ENCODE measurements at regions of chr1 and their contacts with region 1.

Region 1: GRCh38 chr1:193514397-193514796 is 328.0 kb upstream of the B3GALT2 start:
- DNase-seq: no peak
- ATAC-seq: no peak
- H3K4me3 ChIP-seq: no peak overlapping the region
- H3K4me3 Mint-ChIP-seq: no peak overlapping the region
- H3K27ac ChIP-seq: no peak overlapping the region
- H3K27ac Mint-ChIP-seq: no peak overlapping the region
- H3K4me1 ChIP-seq: no peaks in the 10 kb centered on the region
- H3K4me1 Mint-ChIP-seq: peaks cover 0 to 3% (median 0%) of the 10 kb centered on the region in 7 donors
- H3K27me3 ChIP-seq: no peaks in the 10 kb centered on the region
- H3K27me3 Mint-ChIP-seq: no peaks in the 10 kb centered on the region

Region 2: DNA sequence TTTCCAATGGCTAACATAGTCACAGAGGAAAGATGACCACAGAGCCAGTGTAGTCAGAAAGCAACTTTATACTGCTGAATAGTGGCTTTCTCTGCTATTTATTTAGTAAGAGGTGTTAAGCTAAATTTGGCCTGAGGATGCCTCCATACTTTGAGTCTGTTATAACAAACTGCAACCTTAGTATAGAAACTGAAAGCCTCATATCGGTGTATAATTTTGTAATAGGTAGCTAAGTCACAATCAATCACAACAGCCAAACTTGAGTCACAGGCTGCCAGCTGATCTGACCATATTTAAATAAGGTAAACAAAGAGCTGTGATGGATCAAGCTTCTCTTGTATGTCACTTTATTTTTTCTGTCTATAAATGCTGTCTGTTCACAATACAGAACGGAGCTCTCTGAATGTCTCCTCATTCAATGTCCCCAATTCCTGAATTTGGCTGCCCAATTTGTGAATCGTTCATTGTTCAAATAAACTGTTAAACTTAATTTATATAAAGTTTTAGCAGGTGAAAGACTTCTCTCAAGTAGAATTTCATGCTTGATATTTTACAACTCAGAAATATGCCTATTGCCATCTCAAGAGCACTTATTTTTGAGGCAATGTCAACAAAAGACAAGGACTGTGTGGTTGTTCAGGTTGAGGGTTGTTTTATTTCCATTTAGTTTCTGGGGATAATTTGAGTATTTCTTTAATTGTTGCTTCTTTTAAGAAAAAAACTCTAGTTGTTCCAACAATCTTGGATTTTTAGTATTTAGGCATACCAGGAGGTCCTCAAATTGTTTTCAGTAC is 11.7 kb after region 1 on chr1:
- CTCF ChIA-PET with region 1: no interaction called
- POLR2A ChIA-PET with region 1: interaction called, 4 read pairs
- intact Hi-C with region 1: loop called in 1 of 2 experiments (anchors 2 kb)
- DNase-seq: no peak
- ATAC-seq: no peak
- H3K4me3 ChIP-seq: no peak overlapping the region
- H3K4me3 Mint-ChIP-seq: no peak overlapping the region
- H3K27ac ChIP-seq: no peak overlapping the region
- H3K27ac Mint-ChIP-seq: no peak overlapping the region
- H3K4me1 ChIP-seq: no peaks in the 10 kb centered on the region
- H3K4me1 Mint-ChIP-seq: peaks cover 0 to 8% (median 0%) of the 10 kb centered on the region in 7 donors
- H3K27me3 ChIP-seq: no peaks in the 10 kb centered on the region
- H3K27me3 Mint-ChIP-seq: no peaks in the 10 kb centered on the region

Measured in naive thymus-derived CD4-positive, alpha-beta T cell (primary cell).